ENCODE measurements at regions of chr12 and their contacts with region 1.

Region 1: GRCh38 chr12:116277393-116278278 is at the start of gene MED13L:
- DNase-seq: peak; percentile 84
- H3K4me3 Mint-ChIP-seq: peak within 1 kb of the TSS; percentile 88
- H3K27ac Mint-ChIP-seq: peak within 1 kb of the TSS; percentile 85
- H3K4me1 Mint-ChIP-seq: peaks cover 34% of the 10 kb centered on the region
- H3K27me3 Mint-ChIP-seq: no peaks in the 10 kb centered on the region
- total RNA-seq, gene MED13L: 42.4 to 46.0 TPM

Region 2: DNA sequence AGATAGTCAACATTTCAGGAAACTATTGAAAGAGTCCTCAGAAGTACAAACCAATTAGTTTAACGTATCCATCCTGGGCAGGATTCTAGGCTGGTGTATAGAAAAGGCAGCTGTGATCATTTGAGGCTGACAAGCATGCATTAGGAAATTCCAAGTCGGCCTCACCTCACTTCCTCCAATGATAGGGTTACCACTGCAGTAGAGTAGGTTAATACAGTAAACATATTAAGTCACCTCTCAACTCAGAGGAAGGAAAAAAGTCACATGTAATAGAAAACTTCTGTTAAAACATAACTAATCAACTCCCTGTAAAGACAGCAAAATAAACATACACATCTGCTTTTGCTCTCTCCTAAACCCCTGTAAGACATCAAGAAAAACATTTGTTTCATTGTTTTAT is 33.6 kb before region 1 on chr12:
- CTCF ChIA-PET with region 1: interaction called, 6 read pairs
- intact Hi-C with region 1: loop called (anchors 1 kb)
- DNase-seq: peak; percentile 34
- H3K4me3 Mint-ChIP-seq: no peak overlapping the region
- H3K27ac Mint-ChIP-seq: no peak overlapping the region
- H3K4me1 Mint-ChIP-seq: peaks cover 68% of the 10 kb centered on the region
- H3K27me3 Mint-ChIP-seq: no peaks in the 10 kb centered on the region

Region 3: GRCh38 chr12:116325336-116325664 is 47.7 kb after region 1 on chr12:
- CTCF ChIA-PET with region 1: no interaction called
- intact Hi-C with region 1: loop called (anchors 1 kb)
- DNase-seq: peak; percentile 50
- H3K4me3 Mint-ChIP-seq: no peak overlapping the region
- H3K27ac Mint-ChIP-seq: peak overlapping the region; percentile 70
- H3K4me1 Mint-ChIP-seq: peaks cover 32% of the 10 kb centered on the region
- H3K27me3 Mint-ChIP-seq: no peaks in the 10 kb centered on the region

Region 4: GRCh38 chr12:116533343-116534251 is 256.0 kb after region 1 on chr12:
- CTCF ChIA-PET with region 1: no interaction called
- intact Hi-C with region 1: loop called (anchors 2 kb)
- DNase-seq: peak; percentile 82
- H3K4me3 Mint-ChIP-seq: peak overlapping the region; percentile 80
- H3K27ac Mint-ChIP-seq: no peak overlapping the region
- H3K4me1 Mint-ChIP-seq: peaks cover 22% of the 10 kb centered on the region
- H3K27me3 Mint-ChIP-seq: no peaks in the 10 kb centered on the region

Region 5: DNA sequence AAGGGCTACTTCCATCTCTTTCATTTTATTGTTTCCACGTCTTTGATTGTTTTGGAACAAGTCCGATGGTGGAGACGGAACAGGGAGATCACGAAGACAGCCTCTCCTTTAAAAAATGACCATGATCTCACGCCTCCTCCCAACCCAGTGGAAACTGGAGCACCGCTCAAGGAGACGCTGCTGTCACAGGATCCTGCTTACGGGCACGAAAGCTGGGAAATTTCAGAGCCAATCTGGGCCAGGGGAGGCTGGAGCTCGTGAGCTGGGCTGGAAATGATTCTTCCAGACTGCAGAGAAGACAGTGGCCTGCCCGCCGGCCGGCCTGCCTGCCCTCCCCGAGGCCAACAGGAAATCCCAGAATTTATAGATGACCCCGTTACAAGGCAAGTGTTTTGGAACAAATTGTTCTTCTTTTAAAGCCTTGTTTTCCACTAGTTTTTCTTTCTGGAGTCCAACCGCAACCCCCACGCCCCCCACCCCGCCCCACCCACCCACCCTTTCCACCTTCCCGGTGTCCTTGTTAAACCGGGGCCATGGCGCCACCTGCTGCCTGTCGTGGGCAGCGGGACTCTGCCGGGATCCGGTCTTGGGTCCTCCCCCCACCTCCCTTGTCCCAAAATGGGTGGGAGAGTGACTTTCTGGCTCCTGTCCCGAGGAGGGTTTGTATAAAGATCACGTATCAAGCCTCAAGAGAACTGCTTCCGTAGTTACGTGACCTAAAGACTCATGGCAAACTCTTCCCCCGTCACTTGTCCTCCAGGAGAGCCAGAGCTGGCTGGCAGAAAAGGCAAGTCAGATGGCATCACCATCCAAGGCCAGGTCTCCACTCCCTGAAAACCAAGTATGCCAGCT is 321.9 kb after region 1 on chr12:
- CTCF ChIA-PET with region 1: interaction called, 3 read pairs
- intact Hi-C with region 1: loop called (anchors 2 kb)
- DNase-seq: peak; percentile 73
- H3K4me3 Mint-ChIP-seq: no peak overlapping the region
- H3K27ac Mint-ChIP-seq: no peak overlapping the region
- H3K4me1 Mint-ChIP-seq: peaks cover 13% of the 10 kb centered on the region
- H3K27me3 Mint-ChIP-seq: no peaks in the 10 kb centered on the region

Region 6: DNA sequence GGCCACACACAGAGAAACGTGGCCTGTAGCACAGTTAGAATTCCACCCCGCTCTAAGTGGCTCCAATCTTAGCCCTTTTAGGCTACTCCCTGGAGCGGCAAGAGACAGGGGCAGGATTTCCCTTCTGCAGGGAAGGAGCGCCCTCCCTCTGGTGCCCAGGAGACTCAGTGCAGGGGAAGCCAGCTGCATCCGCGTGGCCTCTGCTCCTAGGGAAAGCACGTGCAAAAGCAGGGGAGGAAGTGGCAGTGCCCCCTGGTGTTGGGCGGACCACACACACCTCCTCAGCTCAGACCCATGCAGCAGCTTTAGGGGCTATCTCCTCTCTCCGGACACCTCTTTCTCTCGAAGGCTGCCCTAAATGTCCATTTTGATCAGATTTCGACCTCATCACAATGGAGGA is 410.3 kb after region 1 on chr12:
- CTCF ChIA-PET with region 1: no interaction called
- intact Hi-C with region 1: loop called (anchors 1 kb)
- DNase-seq: peak; percentile 60
- H3K4me3 Mint-ChIP-seq: no peak overlapping the region
- H3K27ac Mint-ChIP-seq: no peak overlapping the region
- H3K4me1 Mint-ChIP-seq: no peaks in the 10 kb centered on the region
- H3K27me3 Mint-ChIP-seq: peaks cover 13% of the 10 kb centered on the region

Region 7: DNA sequence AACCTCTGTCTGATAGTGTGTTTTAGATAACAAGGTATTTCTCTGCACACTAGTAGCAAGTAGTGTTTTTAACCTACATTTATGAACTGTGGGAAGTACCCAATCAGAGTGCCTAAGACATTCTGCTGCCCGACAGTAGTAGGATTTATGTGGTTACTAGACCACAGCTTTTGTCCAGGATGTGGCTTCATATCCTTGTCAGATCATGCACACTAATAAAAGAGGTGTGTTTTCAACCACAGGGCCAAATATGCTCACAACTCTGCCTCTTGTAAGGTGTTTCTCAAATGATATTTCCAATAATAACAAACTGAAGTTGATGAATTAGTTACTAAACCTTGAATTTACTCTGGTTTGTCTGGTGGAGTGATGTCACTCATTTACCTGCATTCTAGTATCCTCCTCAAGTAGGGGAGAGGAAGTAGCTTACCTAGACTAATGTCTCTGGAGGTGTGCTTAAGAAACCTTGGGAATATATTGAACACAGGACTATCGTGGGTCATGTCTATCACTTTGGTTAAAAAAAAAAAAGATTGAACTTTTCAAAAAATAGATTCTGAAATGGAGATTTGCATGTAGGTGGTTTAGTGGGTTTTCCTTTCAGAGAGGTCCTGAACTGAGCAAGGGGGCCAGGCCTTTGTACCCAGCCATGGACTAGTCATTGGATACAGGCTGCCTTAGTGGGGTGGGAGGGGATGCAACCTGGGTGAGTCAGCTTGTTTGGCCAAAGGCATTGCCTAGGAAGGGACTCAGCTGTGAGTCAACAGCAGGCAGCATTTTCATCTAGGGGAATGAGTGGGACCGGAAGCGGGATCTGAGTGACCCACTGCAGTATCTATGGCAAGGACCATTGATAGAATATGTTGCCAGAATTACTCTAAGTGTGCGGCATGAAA is 647.2 kb after region 1 on chr12:
- CTCF ChIA-PET with region 1: no interaction called
- intact Hi-C with region 1: loop called (anchors 5 kb)
- DNase-seq: peak; percentile 70
- H3K4me3 Mint-ChIP-seq: no peak overlapping the region
- H3K27ac Mint-ChIP-seq: no peak overlapping the region
- H3K4me1 Mint-ChIP-seq: peaks cover 66% of the 10 kb centered on the region
- H3K27me3 Mint-ChIP-seq: peaks cover 3% of the 10 kb centered on the region